Calu3 (cell line): ENCODE measurements at regions of chr20 and their contacts with region 1.

Region 1: GRCh38 chr20:51237278-51237677 is 214.4 kb upstream of the KCNG1 start:
- DNase-seq: no peak
- H3K4me3 Mint-ChIP-seq: no peak overlapping the region
- H3K27ac Mint-ChIP-seq: no peak overlapping the region
- H3K4me1 Mint-ChIP-seq: no peaks in the 10 kb centered on the region
- H3K27me3 Mint-ChIP-seq: peaks cover 79% of the 10 kb centered on the region
- CTCF ChIP-seq: no peak

Region 2: DNA sequence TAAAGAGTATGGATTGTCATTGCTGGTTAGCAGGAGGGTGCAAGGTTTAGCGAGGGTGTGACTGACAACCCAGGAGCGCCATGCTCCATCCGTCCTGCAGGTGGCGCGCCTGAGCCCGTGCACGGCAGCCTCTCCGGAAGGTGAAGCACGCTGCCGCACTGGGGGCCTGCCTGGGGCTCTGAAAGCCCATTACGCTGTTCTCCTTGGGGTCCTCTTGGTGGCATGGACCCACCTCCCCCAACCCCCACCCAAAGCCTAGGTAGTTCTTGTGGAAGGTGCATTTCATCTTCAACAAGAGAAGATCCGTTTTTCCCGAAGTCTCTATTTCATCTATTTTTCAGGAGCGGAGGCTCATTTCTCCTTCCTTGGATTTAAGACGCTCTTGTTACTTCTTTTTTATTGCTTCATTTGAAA is 17.0 kb before region 1 on chr20:
- CTCF ChIA-PET with region 1: interaction called, 13 read pairs
- intact Hi-C with region 1: no loop called
- DNase-seq: peak; percentile 78
- H3K4me3 Mint-ChIP-seq: no peak overlapping the region
- H3K27ac Mint-ChIP-seq: no peak overlapping the region
- H3K4me1 Mint-ChIP-seq: peaks cover 13% of the 10 kb centered on the region
- H3K27me3 Mint-ChIP-seq: peaks cover 61% of the 10 kb centered on the region
- CTCF ChIP-seq: peak; percentile 96